Posterior vena cava (tissue), 2 donors: ENCODE measurements at regions of chr14 and their contacts with region 1.

Region 1: GRCh38 chr14:41915732-41916131 is 309.1 kb downstream of the LRFN5 start:
- DNase-seq: no peak

Region 2: DNA sequence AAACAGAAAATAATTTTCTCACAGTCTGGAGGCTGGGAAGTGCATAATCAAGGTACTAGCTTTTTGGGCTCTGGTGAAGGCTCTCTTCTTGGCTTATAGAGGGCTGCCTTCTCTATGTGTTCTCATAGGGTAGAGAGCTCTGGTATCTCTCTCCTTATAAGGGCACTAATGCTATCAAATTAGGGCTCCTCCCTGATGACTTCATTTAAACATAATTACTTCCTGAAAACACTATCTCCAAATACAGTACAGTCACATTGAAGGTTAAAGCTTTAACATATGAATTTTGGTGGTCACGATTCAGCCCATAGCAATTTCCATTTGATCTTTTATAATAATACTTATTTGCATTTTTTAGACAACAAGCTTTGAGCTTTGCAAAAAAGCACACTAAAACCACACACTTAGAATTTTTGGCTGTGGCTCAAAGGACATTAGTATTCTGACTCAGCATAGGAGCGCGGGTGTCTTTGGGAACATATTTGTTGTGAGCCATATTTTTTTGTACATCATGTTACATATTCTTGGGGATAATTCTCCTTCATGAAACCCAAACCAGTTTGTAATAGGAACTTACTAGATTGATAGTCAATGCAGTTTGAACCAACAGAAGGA is 1675.4 kb before region 1 on chr14:
- intact Hi-C with region 1: no loop called
- DNase-seq: no peak

Region 3: GRCh38 chr14:42130809-42131208 is 215.1 kb after region 1 on chr14:
- intact Hi-C with region 1: loop called in 1 of 2 experiments (anchors 5 kb)
- DNase-seq: no peak

Region 4: GRCh38 chr14:42504442-42504841 is 588.7 kb after region 1 on chr14:
- intact Hi-C with region 1: no loop called
- DNase-seq: no peak